Left ventricle myocardium superior (tissue), 1 donor: ENCODE measurements at regions of chr12 and their contacts with region 1.

Region 1: GRCh38 chr12:42237052-42237852 is 796 bp downstream of the YAF2 start:
- DNase-seq: peak; percentile 86
- ATAC-seq: peak; percentile 70

Region 2: DNA sequence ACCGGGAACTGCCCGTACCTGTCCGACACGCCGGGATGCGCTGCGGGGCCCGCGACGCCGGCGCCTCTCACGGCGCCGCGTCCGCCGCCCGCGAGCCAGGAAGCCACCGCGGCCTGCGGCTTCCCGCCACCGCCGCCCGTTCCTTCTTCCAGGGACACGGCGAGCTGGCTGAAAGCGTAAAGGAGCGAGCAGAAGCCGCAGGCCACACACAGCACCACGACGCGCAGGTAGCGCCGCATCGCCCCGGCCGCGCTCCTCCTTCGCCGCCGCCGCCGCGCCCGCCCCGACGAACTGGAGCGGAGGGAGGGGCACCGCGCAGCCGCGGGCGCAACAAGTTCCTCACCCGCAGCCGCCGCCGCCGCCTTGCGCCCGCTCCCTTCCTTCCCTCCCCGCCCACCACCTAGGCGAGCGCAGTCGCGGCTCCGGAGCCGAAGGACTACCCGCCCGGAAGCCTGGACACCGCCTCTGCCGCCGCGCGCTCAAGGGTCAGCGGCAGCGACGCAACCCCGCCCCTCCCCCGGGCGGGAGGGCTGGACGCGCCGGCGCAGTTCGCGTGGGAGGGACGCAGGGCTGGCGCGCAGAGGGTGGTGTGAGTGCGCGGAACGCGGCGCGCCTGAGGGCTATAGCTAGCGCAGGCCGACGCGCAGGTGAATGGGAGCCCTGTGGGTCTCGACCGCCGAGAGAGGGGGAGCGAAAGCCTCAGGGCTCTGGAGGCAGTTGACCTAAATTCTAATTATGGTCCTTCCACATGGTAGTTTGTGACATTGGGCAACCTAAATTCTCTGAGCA is 92.7 kb before region 1 on chr12 and contains the start of gene GXYLT1:
- intact Hi-C with region 1: loop called (anchors 10 kb)
- DNase-seq: peak; percentile 96
- ATAC-seq: peak; percentile 99
- total RNA-seq, gene GXYLT1: 4.8 TPM

Region 3: DNA sequence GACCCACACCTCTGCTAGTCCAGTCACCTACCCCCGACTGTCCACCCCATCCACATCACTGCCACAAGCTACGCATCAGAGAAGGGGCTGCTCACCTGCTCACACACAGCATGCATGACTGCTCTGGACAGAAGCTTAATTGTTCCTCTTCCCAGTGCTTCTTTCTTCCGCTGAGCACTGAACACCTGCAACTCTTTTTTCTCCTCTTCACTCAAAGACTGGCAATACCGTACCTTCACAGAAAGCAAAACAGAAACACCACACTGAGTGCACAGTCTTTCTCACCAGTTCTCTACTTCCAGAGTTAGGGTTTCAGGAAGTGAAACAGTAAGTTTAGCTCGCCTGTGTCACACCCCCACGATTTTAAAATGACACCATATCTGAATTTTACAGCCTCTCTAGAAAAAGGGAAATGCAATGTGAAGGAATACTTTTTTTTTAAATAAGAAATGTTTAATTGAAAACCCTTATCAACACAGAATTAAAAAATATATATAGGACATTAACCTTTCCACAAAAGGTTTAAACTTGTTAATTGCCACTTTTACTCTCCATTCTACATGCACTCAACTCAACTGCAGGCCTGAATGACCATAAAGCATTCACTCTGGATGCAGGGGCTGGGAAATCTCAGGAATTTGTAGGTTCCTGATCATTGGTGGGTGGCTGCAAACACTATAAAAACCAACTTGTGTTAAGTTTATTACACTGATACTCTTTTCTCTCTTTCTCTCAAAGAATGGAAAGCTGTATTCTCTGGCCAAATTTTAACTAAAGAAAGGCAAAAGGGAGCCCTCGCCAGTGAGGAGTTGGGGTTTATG is 232.3 kb after region 1 on chr12:
- intact Hi-C with region 1: no loop called
- DNase-seq: no peak
- ATAC-seq: peak; percentile 7